ENCODE measurements at regions of chrX and their contacts with region 1.

Region 1: GRCh38 chrX:110853610-110854009 is 58.0 kb upstream of the CHRDL1 start:
- DNase-seq: no peak
- ATAC-seq: 0 out of 2 replicates have a peak, but pooled peaks have one; percentile 29
- H3K4me3 ChIP-seq: no peak overlapping the region
- H3K27ac ChIP-seq: no peak overlapping the region
- H3K4me1 ChIP-seq: no peaks in the 10 kb centered on the region
- H3K27me3 ChIP-seq: peaks cover 24% of the 10 kb centered on the region
- CTCF ChIP-seq: 0 out of 2 replicates have a peak, but pooled peaks have one; percentile 24
- POLR2A ChIP-seq: no peak
- RAD21 ChIP-seq: no peak

Region 2: GRCh38 chrX:111100186-111100980 is 246.8 kb after region 1 on chrX:
- CTCF ChIA-PET with region 1: no interaction called
- POLR2A ChIA-PET with region 1: no interaction called
- dilution Hi-C with region 1: no loop called
- in situ Hi-C with region 1: no loop called
- intact Hi-C with region 1: loop called (anchors 5 kb)
- DNase-seq: peak; percentile 24
- ATAC-seq: peak; percentile 48; the same call in 1 of the 2 replicates
- H3K4me3 ChIP-seq: no peak overlapping the region
- H3K27ac ChIP-seq: no peak overlapping the region
- H3K4me1 ChIP-seq: no peaks in the 10 kb centered on the region
- H3K27me3 ChIP-seq: peaks cover 17% of the 10 kb centered on the region
- CTCF ChIP-seq: peak; percentile 50
- POLR2A ChIP-seq: no peak
- RAD21 ChIP-seq: peak; percentile 49

Measured in IMR-90 (cell line).